OCI-LY7 (cell line): ENCODE measurements at regions of chr5 and their contacts with region 1.

Region 1: DNA sequence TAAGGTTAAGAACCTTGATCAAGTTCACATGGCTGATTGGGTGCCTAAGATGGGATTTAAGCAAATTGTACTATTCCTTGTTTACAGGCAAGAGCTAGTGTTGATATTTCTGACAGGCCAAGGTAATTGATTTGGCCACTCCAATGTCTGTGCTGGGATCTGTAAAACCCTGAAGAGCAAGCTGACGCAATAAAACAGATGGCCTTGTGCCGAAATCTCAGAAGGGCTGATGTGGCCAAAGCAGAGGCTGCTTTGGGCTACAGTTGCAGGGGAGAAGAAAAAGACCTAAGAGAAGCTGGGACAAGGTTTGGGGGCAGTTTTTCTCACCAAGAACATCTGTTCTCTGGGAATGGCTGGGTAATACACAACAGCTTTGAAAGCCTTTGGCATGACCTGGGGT is 463.2 kb upstream of the ZNF608 start:
- DNase-seq: no peak
- H3K4me3 ChIP-seq: no peak overlapping the region
- H3K27ac ChIP-seq: no peak overlapping the region
- H3K4me1 ChIP-seq: no peaks in the 10 kb centered on the region
- CTCF ChIP-seq: no peak

Region 2: DNA sequence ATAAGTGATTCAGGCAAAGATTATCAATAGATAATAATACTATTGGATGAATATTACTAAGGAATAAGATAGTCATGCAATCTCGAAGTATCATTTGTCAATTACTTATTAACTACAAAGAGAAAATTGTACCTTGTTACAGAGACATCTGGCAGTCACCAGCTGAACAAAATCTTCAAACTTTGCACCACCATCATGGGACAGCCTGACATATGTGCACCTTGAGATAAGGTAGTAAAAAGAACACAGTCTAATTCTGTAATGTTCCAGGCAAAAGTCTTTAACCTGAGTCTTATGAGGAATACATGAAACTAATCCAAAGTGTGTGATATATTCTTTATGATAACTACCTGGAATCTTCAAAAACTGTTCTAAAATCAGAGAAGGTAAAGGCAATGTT is 40.3 kb before region 1 on chr5:
- CTCF ChIA-PET with region 1: no interaction called
- POLR2A ChIA-PET with region 1: no interaction called
- intact Hi-C with region 1: no loop called
- DNase-seq: no peak
- H3K4me3 ChIP-seq: no peak overlapping the region
- H3K27ac ChIP-seq: no peak overlapping the region
- H3K4me1 ChIP-seq: no peaks in the 10 kb centered on the region
- CTCF ChIP-seq: no peak

Region 3: GRCh38 chr5:125198270-125198974 is 11.2 kb before region 1 on chr5:
- CTCF ChIA-PET with region 1: no interaction called
- POLR2A ChIA-PET with region 1: interaction called, 10 read pairs
- intact Hi-C with region 1: no loop called
- DNase-seq: peak; percentile 47
- H3K4me3 ChIP-seq: no peak overlapping the region
- H3K27ac ChIP-seq: no peak overlapping the region
- H3K4me1 ChIP-seq: peaks cover 41% of the 10 kb centered on the region
- CTCF ChIP-seq: no peak